Posterior cingulate gyrus (tissue), 11 donors: ENCODE measurements at regions of chr2 and their contacts with region 1.

Region 1: GRCh38 chr2:156341452-156342253 is 9.1 kb upstream of the NR4A2 start:
- DNase-seq: peak; percentile 65 to 96 (median 76)

Region 2: GRCh38 chr2:155930312-155930711 is 411.3 kb before region 1 on chr2:
- intact Hi-C with region 1: no loop called
- DNase-seq: no peak

Region 3: DNA sequence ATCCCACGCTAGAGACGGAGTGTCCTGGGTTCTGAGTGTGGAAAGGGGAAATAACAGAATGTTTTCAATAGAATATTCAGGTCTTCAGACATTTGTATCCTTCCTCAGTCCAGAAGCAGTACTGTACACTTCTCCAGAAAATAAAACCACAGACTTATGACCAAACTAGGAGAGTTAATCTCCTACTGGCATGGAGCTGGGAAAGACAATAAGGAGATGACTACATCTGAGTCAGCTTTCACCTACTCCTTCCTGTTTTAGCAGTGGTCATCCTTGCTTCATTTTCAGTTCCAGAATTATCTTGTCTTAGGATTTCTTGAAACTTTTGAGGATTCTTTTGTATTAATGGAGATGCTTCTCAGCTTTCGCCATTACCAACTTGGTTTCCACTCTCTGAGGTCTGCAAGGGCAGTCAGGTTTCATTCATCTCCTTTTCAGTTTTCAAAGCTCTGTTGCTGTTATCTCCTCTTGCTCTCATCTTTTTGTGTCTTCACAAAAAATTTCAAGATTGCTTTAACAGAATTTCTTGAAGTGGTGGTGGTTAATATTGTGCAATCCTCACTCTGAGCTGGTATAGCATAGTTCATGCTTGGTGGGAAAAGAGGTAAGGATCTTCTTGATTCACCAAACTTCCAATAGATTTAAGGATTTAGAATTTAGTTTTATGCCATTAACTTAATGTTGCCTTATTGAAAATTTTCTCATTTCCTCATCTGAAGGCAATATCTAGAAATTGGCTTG is 14.5 kb after region 1 on chr2:
- intact Hi-C with region 1: no loop called
- DNase-seq: no peak

Region 4: DNA sequence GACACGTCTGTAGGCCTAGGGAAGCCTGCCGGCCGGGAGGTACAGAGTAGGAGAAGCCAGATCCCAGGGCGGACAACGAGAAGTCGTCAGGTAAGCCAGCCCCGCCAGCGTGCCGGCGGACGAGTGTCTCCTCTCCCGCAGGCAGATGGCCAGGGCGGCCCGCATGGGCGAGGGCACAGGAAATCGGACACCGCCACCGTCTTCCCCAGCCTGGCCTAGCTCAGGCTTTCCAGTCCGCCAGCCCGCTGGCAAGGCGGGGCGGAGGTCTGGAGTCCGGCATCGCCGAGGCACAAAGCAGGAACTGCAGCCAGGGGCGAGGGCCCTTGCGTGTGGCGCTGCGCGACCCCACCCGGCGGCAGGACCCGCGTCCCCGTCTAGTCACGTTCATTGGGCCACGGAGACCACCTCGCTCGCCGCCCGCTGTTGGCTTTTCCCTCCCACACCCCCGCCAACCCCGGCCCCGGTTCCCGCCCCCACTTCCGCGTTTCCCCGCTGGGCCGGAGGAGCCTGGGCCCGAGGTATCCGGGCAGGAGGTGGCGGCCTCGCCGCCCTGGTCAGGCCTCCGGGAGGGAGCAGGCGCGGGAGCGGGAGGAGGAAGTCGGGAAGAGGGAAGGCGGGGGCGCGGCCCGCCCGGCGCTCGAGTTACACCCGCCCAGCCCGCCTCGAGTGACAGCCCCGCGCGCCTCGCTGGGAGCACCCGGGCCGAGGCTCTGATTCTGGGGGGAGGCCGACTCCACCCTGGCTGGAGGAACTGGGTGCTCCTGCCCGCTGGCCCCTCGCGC is 94.3 kb after region 1 on chr2 and contains the start of gene GPD2:
- intact Hi-C with region 1: loop called (anchors 1 kb)
- DNase-seq: peak; percentile 74 to 97 (median 82)